Naive thymus-derived CD4-positive, alpha-beta T cell (primary cell): ENCODE measurements at regions of chr9 and their contacts with region 1.

Region 1: GRCh38 chr9:92963831-92964626 is 16.7 kb downstream of the FGD3 start:
- DNase-seq: peak; percentile 54 to 94 (median 93)
- ATAC-seq: peak; percentile 84
- H3K4me3 ChIP-seq: peak overlapping the region; percentile 85
- H3K4me3 Mint-ChIP-seq: peak overlapping the region; percentile 86 to 98 (median 93)
- H3K27ac ChIP-seq: peak overlapping the region; percentile 85
- H3K27ac Mint-ChIP-seq: peak overlapping the region; percentile 96 to 99 (median 98)
- H3K4me1 ChIP-seq: peaks cover 60 to 67% of the 10 kb centered on the region in 2 donors
- H3K4me1 Mint-ChIP-seq: peaks cover 40 to 63% (median 56%) of the 10 kb centered on the region in 7 donors
- H3K27me3 ChIP-seq: no peaks in the 10 kb centered on the region
- H3K27me3 Mint-ChIP-seq: no peaks in the 10 kb centered on the region

Region 2: DNA sequence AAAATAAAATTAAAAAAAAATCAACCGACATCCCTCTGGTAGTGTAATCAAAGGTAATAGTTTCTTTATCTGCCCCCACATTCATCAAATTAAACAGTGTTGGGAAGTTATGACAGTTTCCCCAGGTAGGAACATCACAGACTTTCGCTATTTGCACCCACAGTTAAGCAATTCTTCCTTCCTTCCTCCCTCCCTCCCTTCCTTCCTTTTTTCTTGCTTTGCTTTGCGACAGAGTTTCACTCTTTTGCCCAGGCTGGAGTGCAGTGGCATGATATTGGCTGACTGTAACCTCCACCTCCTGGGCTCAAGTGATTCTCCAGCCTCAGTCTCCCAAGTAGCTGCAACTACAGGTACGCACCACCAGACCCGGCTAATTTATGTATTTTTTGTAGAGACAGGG is 188.6 kb before region 1 on chr9:
- CTCF ChIA-PET with region 1: no interaction called
- POLR2A ChIA-PET with region 1: no interaction called
- intact Hi-C with region 1: no loop called
- DNase-seq: no peak
- ATAC-seq: no peak
- H3K4me3 ChIP-seq: no peak overlapping the region
- H3K4me3 Mint-ChIP-seq: no peak overlapping the region
- H3K27ac ChIP-seq: no peak overlapping the region
- H3K27ac Mint-ChIP-seq: peak overlapping the region in 1 of 9 donors; percentile 21
- H3K4me1 ChIP-seq: peaks cover 0 to 8% of the 10 kb centered on the region in 2 donors
- H3K4me1 Mint-ChIP-seq: peaks cover 4 to 13% (median 7%) of the 10 kb centered on the region in 7 donors
- H3K27me3 ChIP-seq: no peaks in the 10 kb centered on the region
- H3K27me3 Mint-ChIP-seq: peaks cover 0 to 5% (median 0%) of the 10 kb centered on the region in 5 donors

Region 3: GRCh38 chr9:92887880-92888338 is 76.1 kb before region 1 on chr9:
- CTCF ChIA-PET with region 1: interaction called, 3 read pairs
- POLR2A ChIA-PET with region 1: interaction called, 16 read pairs
- intact Hi-C with region 1: no loop called
- DNase-seq: peak in 7 of 9 donors; percentile 60 to 79 (median 67)
- ATAC-seq: peak; percentile 74
- H3K4me3 ChIP-seq: peak overlapping the region; percentile 29
- H3K4me3 Mint-ChIP-seq: peak overlapping the region; percentile 4 to 92 (median 77)
- H3K27ac ChIP-seq: peak overlapping the region; percentile 57
- H3K27ac Mint-ChIP-seq: peak overlapping the region; percentile 23 to 97 (median 92)
- H3K4me1 ChIP-seq: peaks cover 18 to 35% of the 10 kb centered on the region in 2 donors
- H3K4me1 Mint-ChIP-seq: peaks cover 21 to 86% (median 78%) of the 10 kb centered on the region in 7 donors
- H3K27me3 ChIP-seq: no peaks in the 10 kb centered on the region
- H3K27me3 Mint-ChIP-seq: peaks cover 0 to 6% (median 0%) of the 10 kb centered on the region in 5 donors

Region 4: GRCh38 chr9:92980085-92980745 is 16.2 kb after region 1 on chr9:
- CTCF ChIA-PET with region 1: interaction called, 3 read pairs
- POLR2A ChIA-PET with region 1: interaction called, 50 read pairs
- intact Hi-C with region 1: no loop called
- DNase-seq: no peak
- ATAC-seq: peak; percentile 42
- H3K4me3 ChIP-seq: no peak overlapping the region
- H3K4me3 Mint-ChIP-seq: peak overlapping the region; percentile 56 to 85 (median 72)
- H3K27ac ChIP-seq: peak overlapping the region; percentile 67
- H3K27ac Mint-ChIP-seq: peak overlapping the region; percentile 74 to 94 (median 84)
- H3K4me1 ChIP-seq: peaks cover 54 to 63% of the 10 kb centered on the region in 2 donors
- H3K4me1 Mint-ChIP-seq: peaks cover 56 to 89% (median 76%) of the 10 kb centered on the region in 7 donors
- H3K27me3 ChIP-seq: no peaks in the 10 kb centered on the region
- H3K27me3 Mint-ChIP-seq: no peaks in the 10 kb centered on the region

Region 5: GRCh38 chr9:93013856-93014582 is 50.0 kb after region 1 on chr9:
- CTCF ChIA-PET with region 1: no interaction called
- POLR2A ChIA-PET with region 1: interaction called, 233 read pairs
- intact Hi-C with region 1: no loop called
- DNase-seq: no peak
- ATAC-seq: no peak
- H3K4me3 ChIP-seq: no peak overlapping the region
- H3K4me3 Mint-ChIP-seq: peak overlapping the region in 2 of 10 donors; percentile 14 to 20
- H3K27ac ChIP-seq: peak overlapping the region; percentile 0
- H3K27ac Mint-ChIP-seq: peak overlapping the region in 8 of 9 donors; percentile 27 to 91 (median 84)
- H3K4me1 ChIP-seq: peaks cover 0 to 8% of the 10 kb centered on the region in 2 donors
- H3K4me1 Mint-ChIP-seq: peaks cover 14 to 46% (median 25%) of the 10 kb centered on the region in 7 donors
- H3K27me3 ChIP-seq: no peaks in the 10 kb centered on the region
- H3K27me3 Mint-ChIP-seq: no peaks in the 10 kb centered on the region

Region 6: GRCh38 chr9:93058355-93059096 is 94.5 kb after region 1 on chr9 and contains the start of gene SUSD3:
- CTCF ChIA-PET with region 1: interaction called, 4 read pairs
- POLR2A ChIA-PET with region 1: interaction called, 105 read pairs
- intact Hi-C with region 1: no loop called
- DNase-seq: peak; percentile 47 to 82 (median 65)
- ATAC-seq: peak; percentile 81
- H3K4me3 ChIP-seq: peak within 1 kb of the TSS; percentile 90
- H3K4me3 Mint-ChIP-seq: peak within 1 kb of the TSS; percentile 93 to 97 (median 94)
- H3K27ac ChIP-seq: peak within 1 kb of the TSS; percentile 88
- H3K27ac Mint-ChIP-seq: peak within 1 kb of the TSS; percentile 97 to 100 (median 99)
- H3K4me1 ChIP-seq: peaks cover 52 to 56% of the 10 kb centered on the region in 2 donors
- H3K4me1 Mint-ChIP-seq: peaks cover 31 to 78% (median 65%) of the 10 kb centered on the region in 7 donors
- H3K27me3 ChIP-seq: no peaks in the 10 kb centered on the region
- H3K27me3 Mint-ChIP-seq: no peaks in the 10 kb centered on the region
- total RNA-seq, gene SUSD3: 62.8 to 83.5 (median 68.7) TPM

Region 7: GRCh38 chr9:93134015-93134739 is 170.1 kb after region 1 on chr9 and contains the start of gene NINJ1:
- CTCF ChIA-PET with region 1: no interaction called
- POLR2A ChIA-PET with region 1: interaction called, 8 read pairs
- intact Hi-C with region 1: loop called in 1 of 2 experiments (anchors 1 kb)
- DNase-seq: peak; percentile 72 to 93 (median 83)
- ATAC-seq: peak; percentile 87
- H3K4me3 ChIP-seq: peak within 1 kb of the TSS; percentile 68
- H3K4me3 Mint-ChIP-seq: peak within 1 kb of the TSS; percentile 87 to 92 (median 90)
- H3K27ac ChIP-seq: peak within 1 kb of the TSS; percentile 99
- H3K27ac Mint-ChIP-seq: peak within 1 kb of the TSS; percentile 84 to 98 (median 98)
- H3K4me1 ChIP-seq: peaks cover 27 to 55% of the 10 kb centered on the region in 2 donors
- H3K4me1 Mint-ChIP-seq: peaks cover 40 to 80% (median 63%) of the 10 kb centered on the region in 7 donors
- H3K27me3 ChIP-seq: no peaks in the 10 kb centered on the region
- H3K27me3 Mint-ChIP-seq: no peaks in the 10 kb centered on the region
- total RNA-seq, gene NINJ1: 30.7 to 163 (median 64.7) TPM